ENCODE measurements at regions of chr12 and their contacts with region 1.

Region 1: DNA sequence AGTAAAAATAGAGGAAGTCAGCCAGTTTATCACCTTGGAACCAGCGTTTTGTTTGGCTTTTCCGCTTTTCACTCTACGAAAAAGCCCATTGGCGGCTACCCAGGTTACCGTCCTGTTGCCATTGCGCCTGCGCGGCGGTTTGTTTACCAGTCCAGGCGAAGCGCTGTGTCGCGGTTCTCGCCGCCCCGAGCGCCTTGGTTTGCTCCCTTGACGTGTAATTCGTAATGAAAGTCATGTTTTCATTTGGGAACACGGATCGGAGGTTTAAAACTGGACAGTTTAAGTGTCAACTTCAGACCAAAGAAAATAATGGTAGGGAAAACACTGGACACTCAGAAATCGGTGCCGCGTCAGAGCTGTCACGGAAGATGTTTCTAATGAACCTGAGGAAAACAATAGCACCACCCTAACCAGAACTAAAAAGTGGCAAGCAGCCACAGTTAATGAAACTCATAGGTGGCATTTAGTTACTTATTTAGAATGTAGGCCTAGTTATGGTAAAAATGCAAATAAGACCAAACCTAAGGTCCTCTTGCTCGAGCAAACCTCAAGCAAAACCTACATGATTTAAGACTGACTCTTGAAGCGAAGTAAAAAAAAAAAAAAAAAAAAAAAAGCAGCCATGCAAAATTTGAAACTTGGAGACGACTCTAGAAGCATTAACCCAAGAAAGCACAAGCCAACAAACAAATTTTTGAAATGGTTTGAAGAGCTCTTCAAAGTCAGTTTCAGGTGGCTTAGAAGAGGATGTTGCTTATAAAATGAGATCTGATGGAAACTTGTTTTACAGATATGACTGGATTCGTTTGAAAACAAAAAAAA is 790 bp upstream of the GPR19 start:
- DNase-seq: peak; percentile 76 to 94
- H3K4me3 ChIP-seq: peak overlapping the region; percentile 60 to 74
- H3K27ac ChIP-seq: peak overlapping the region; percentile 84 to 94
- H3K4me1 ChIP-seq: no peaks in the 10 kb centered on the region
- H3K27me3 ChIP-seq: no peaks in the 10 kb centered on the region
- CTCF ChIP-seq: no peak

Region 2: DNA sequence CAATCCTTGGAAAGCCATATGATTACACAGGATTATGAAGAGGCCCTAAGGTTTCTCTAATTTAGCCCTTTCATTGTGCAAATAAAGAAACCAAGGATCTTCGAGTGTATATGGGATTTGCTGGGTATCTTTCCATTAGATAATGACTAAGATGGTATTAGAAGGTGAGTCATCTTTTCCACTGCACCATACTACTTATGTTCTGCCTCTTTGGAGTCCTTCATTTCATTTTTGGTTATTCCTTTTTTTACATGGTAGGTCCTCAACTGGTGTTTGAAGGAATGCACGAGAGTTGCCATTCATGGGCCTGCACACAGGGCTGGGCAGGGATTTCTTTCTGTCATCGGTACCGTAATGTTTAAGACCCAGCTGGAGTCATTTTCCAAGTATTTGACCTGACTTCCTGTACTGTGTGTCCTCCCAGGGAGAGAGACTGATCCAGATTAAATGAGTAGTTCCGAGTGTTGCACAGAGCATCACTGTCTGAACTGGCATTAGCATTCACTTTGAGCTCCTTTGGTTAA is 254.2 kb before region 1 on chr12:
- intact Hi-C with region 1: loop called (anchors 10 kb)
- DNase-seq: peak in 1 of 2 donors; percentile 73
- H3K4me3 ChIP-seq: peak overlapping the region in 1 of 2 donors; percentile 30
- H3K27ac ChIP-seq: peak overlapping the region; percentile 80 to 87
- H3K4me1 ChIP-seq: peaks cover 0 to 36% of the 10 kb centered on the region in 2 donors
- H3K27me3 ChIP-seq: no peaks in the 10 kb centered on the region
- CTCF ChIP-seq: no peak

Region 3: DNA sequence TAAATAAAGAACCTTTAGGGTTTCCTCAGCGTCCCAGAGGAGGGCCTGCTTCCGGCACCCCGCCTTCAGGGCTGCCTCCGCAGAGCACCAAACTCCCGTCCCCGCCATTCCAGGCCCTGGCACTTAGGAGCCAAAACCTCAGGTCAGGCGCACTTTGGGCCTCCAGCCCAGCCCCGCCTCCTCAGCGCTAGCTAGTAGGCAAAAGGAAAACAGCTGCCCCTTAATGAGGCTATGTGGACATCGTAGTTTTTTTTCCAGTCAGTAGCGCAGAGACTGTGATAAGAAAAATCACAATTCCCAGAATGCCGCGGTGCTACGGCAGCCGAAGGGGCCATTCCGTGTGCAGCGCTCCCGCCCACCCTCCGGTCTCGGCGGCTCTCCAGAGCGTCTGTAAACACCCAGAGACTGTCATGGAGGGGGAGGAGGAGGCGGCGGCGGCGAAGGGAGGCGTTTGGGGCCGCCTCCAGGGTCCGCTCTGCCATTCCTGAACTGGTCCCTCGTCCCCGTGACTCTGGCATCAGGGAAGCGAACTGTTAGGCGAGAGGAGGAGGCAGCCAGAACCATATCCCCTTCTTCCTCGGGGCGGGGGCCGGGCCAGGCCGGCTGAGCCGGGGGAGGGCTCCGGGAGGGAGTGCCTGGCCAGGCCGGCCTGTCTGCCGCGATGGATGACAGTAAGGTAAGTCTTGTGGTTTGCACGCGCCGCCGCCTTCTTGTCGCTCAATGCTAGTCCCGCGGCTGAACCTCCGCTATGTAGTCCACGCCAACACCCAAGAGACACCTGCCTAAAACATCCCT is 85.1 kb before region 1 on chr12 and contains the start of gene CREBL2:
- intact Hi-C with region 1: loop called (anchors 2 kb)
- DNase-seq: peak; percentile 83 to 97
- H3K4me3 ChIP-seq: peak within 1 kb of the TSS; percentile 76 to 83
- H3K27ac ChIP-seq: peak within 1 kb of the TSS; percentile 91 to 94
- H3K4me1 ChIP-seq: peaks cover 3 to 16% of the 10 kb centered on the region in 2 donors
- H3K27me3 ChIP-seq: no peaks in the 10 kb centered on the region
- CTCF ChIP-seq: no peak
- total RNA-seq, gene CREBL2: 19.4 TPM

Region 4: GRCh38 chr12:12628013-12628412 is 68.8 kb before region 1 on chr12:
- intact Hi-C with region 1: no loop called
- DNase-seq: no peak
- H3K4me3 ChIP-seq: no peak overlapping the region
- H3K27ac ChIP-seq: no peak overlapping the region
- H3K4me1 ChIP-seq: peaks cover 0 to 4% of the 10 kb centered on the region in 2 donors
- H3K27me3 ChIP-seq: no peaks in the 10 kb centered on the region
- CTCF ChIP-seq: no peak

Region 5: DNA sequence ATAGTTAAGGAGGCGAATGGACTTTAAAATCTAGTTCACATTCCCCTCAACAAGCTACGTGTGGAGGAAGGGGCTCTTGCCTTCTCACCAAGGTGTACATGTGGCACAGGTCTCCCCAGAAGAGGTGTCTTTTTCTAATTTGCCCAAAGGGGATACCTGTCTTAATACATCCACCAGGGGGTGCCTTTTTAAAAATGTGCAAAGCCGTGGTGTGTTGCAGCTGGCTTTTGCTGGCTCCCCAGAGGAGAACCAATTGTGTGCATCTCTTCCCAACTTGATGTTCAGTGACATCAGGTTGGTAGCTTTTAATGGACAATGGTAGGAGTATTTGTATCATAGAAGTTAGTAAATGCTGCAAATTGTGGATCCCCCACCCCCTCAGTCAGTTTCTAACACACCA is 51.3 kb before region 1 on chr12:
- intact Hi-C with region 1: loop called (anchors 2 kb)
- DNase-seq: no peak
- H3K4me3 ChIP-seq: no peak overlapping the region
- H3K27ac ChIP-seq: no peak overlapping the region
- H3K4me1 ChIP-seq: no peaks in the 10 kb centered on the region
- H3K27me3 ChIP-seq: no peaks in the 10 kb centered on the region
- CTCF ChIP-seq: peak; percentile 8 to 42 (median 33)

Region 6: DNA sequence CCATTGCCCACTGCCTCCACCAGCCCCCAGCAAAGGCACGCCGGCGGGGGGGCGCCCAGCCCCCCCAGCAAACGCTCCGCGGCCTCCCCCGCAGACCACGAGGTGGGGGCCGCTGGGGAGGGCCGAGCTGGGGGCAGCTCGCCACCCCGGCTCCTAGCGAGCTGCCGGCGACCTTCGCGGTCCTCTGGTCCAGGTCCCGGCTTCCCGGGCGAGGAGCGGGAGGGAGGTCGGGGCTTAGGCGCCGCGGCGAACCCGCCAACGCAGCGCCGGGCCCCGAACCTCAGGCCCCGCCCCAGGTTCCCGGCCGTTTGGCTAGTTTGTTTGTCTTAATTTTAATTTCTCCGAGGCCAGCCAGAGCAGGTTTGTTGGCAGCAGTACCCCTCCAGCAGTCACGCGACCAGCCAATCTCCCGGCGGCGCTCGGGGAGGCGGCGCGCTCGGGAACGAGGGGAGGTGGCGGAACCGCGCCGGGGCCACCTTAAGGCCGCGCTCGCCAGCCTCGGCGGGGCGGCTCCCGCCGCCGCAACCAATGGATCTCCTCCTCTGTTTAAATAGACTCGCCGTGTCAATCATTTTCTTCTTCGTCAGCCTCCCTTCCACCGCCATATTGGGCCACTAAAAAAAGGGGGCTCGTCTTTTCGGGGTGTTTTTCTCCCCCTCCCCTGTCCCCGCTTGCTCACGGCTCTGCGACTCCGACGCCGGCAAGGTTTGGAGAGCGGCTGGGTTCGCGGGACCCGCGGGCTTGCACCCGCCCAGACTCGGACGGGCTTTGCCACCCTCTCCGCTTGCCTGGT is 20.2 kb after region 1 on chr12 and contains the start of gene CDKN1B:
- intact Hi-C with region 1: loop called (anchors 1 kb)
- DNase-seq: peak; percentile 76 to 96
- H3K4me3 ChIP-seq: peak within 1 kb of the TSS; percentile 75 to 88
- H3K27ac ChIP-seq: peak within 1 kb of the TSS; percentile 96 to 99
- H3K4me1 ChIP-seq: peaks cover 3 to 34% of the 10 kb centered on the region in 2 donors
- H3K27me3 ChIP-seq: no peaks in the 10 kb centered on the region
- CTCF ChIP-seq: no peak
- total RNA-seq, gene CDKN1B: 65.1 TPM

Region 7: DNA sequence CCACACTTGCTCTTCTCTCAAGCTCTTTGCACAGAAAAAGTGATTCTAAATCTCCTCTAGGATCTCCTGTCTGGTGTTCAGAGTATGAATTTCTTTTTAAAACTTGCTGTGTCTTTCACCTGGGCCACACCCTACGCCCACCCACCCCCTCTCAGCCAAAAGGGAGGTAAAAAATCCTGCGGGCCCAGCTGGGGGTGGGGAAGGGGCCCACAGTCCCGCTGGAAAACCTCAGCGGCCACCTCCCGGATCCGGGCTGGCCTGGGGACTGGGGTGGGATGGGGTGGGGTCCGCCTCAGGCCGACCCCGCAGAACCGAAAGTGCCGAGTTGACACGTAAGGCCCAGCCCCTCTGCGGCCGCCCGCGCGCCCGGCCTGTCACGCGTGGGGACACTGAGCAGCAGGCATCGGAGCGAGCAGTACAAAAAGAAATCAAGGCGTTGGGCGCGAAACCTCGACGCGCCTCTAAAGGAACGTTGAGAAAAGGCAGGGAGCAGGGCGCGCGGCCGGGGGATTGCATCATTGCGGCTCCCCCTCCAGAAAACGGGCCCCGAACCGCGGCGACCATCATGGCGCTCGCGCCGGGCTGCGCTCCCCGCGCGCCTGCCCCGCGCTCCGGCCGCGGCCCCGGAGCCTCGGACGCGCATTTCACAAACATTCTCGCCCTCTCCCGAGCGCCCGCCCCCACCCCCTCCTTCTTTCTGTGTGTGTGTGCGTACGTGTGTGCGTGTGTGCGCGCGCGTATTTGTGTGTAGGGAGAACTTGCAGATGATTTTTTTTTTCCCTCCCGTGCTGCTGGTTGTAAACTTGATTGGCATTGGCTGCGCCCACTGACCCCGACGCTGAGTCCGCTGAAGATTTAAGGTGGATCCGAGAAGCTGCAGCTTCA is 28.1 kb after region 1 on chr12:
- intact Hi-C with region 1: loop called (anchors 2 kb)
- DNase-seq: peak; percentile 88 to 98
- H3K4me3 ChIP-seq: peak overlapping the region; percentile 70 to 75
- H3K27ac ChIP-seq: peak overlapping the region; percentile 96 to 97
- H3K4me1 ChIP-seq: peaks cover 3 to 25% of the 10 kb centered on the region in 2 donors
- H3K27me3 ChIP-seq: no peaks in the 10 kb centered on the region
- CTCF ChIP-seq: peak in 2 of 3 experiments; percentile 7